ENCODE measurements at regions of chr9 and their contacts with region 1.

Region 1: GRCh38 chr9:128702445-128702948 is at the start of gene PKN3:
- DNase-seq: peak; percentile 91
- ATAC-seq: peak; percentile 85
- H3K4me3 Mint-ChIP-seq: peak within 1 kb of the TSS; percentile 85
- H3K27ac Mint-ChIP-seq: peak within 1 kb of the TSS; percentile 24
- H3K4me1 Mint-ChIP-seq: peaks cover 13% of the 10 kb centered on the region
- H3K27me3 Mint-ChIP-seq: no peaks in the 10 kb centered on the region
- CTCF ChIP-seq: peak; percentile 57
- total RNA-seq, gene PKN3: 16.9 and 17.4 TPM in 2 replicates

Region 2: GRCh38 chr9:128688512-128689292 is 13.8 kb before region 1 on chr9 and contains the start of gene SET:
- CTCF ChIA-PET with region 1: interaction called, 7 read pairs
- POLR2A ChIA-PET with region 1: interaction called, 16 read pairs
- intact Hi-C with region 1: loop called (anchors 1 kb)
- DNase-seq: peak; percentile 97
- ATAC-seq: peak; percentile 81
- H3K4me3 Mint-ChIP-seq: peak within 1 kb of the TSS; percentile 98
- H3K27ac Mint-ChIP-seq: peak within 1 kb of the TSS; percentile 87
- H3K4me1 Mint-ChIP-seq: peaks cover 68% of the 10 kb centered on the region
- H3K27me3 Mint-ChIP-seq: no peaks in the 10 kb centered on the region
- CTCF ChIP-seq: no peak
- total RNA-seq, gene SET: 762 and 801 TPM in 2 replicates

Region 3: GRCh38 chr9:128733256-128733655 is 30.8 kb after region 1 on chr9:
- CTCF ChIA-PET with region 1: no interaction called
- POLR2A ChIA-PET with region 1: interaction called, 10 read pairs
- intact Hi-C with region 1: no loop called
- DNase-seq: no peak
- ATAC-seq: peak; percentile 42
- H3K4me3 Mint-ChIP-seq: no peak overlapping the region
- H3K27ac Mint-ChIP-seq: no peak overlapping the region
- H3K4me1 Mint-ChIP-seq: no peaks in the 10 kb centered on the region
- H3K27me3 Mint-ChIP-seq: no peaks in the 10 kb centered on the region
- CTCF ChIP-seq: no peak

Region 4: GRCh38 chr9:128786681-128787601 is 84.4 kb after region 1 on chr9 and contains the start of gene TBC1D13:
- CTCF ChIA-PET with region 1: no interaction called
- POLR2A ChIA-PET with region 1: no interaction called
- intact Hi-C with region 1: loop called (anchors 1 kb)
- DNase-seq: peak; percentile 96
- ATAC-seq: peak; percentile 95
- H3K4me3 Mint-ChIP-seq: peak within 1 kb of the TSS; percentile 95
- H3K27ac Mint-ChIP-seq: peak within 1 kb of the TSS; percentile 85
- H3K4me1 Mint-ChIP-seq: peaks cover 17% of the 10 kb centered on the region
- H3K27me3 Mint-ChIP-seq: no peaks in the 10 kb centered on the region
- CTCF ChIP-seq: no peak
- total RNA-seq, gene TBC1D13: 21.5 and 26.4 TPM in 2 replicates

Region 5: GRCh38 chr9:128947422-128948301 is 245.2 kb after region 1 on chr9 and contains the starts of genes DOLK and NUP188:
- CTCF ChIA-PET with region 1: no interaction called
- POLR2A ChIA-PET with region 1: no interaction called
- intact Hi-C with region 1: loop called (anchors 10 kb)
- DNase-seq: peak; percentile 100
- ATAC-seq: peak; percentile 86
- H3K4me3 Mint-ChIP-seq: peak within 1 kb of the TSS; percentile 98
- H3K27ac Mint-ChIP-seq: peak within 1 kb of the TSS; percentile 97
- H3K4me1 Mint-ChIP-seq: peaks cover 29% of the 10 kb centered on the region
- H3K27me3 Mint-ChIP-seq: no peaks in the 10 kb centered on the region
- CTCF ChIP-seq: no peak
- total RNA-seq, gene DOLK: 9.0 and 10.3 TPM in 2 replicates
- total RNA-seq, gene NUP188: 76.9 and 103 TPM in 2 replicates

Measured in activated B cell treated with CpG ODN at 0.5 μM for 24 hours (primary cell).